Posterior vena cava (tissue), 2 donors: ENCODE measurements at regions of chr3 and their contacts with region 1.

Region 1: GRCh38 chr3:127114337-127115070 is 78.4 kb upstream of the PRR23E start:
- DNase-seq: no peak

Region 2: DNA sequence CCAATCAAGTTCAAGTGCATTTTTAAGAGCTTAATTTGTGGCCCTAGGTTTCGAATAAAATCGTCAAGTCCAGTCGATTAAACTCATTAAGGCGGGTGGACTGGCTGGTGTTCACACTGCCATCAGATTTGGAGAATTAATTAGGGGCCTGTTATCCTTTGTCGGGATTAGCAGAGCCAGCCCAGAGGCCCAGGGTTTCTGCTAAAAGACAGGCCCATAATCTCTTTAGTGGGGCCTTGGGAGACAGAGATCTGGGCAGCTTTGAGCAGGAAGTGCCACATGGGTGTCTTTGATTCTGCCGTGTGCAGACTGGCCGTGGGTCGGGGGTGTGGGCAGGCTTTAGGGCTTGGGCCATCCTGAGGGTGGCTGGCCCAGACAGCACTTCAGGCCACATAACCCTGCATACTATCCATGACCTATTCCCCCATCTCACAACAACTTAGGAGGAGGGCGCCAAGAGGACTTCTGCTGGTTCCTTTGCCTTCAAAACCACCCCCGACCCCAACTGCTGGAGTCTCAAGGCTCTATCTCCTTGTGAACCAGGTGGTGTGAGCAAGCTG is 36.9 kb before region 1 on chr3:
- intact Hi-C with region 1: loop called in 1 of 2 experiments (anchors 1 kb)
- DNase-seq: peak; percentile 45

Region 3: GRCh38 chr3:127135241-127136023 is 20.9 kb after region 1 on chr3:
- intact Hi-C with region 1: no loop called
- DNase-seq: no peak

Region 4: GRCh38 chr3:127172781-127173515 is 58.4 kb after region 1 on chr3:
- intact Hi-C with region 1: loop called in 1 of 2 experiments (anchors 1 kb)
- DNase-seq: no peak